A549 (cell line): ENCODE measurements at regions of chr2 and their contacts with region 1.

Region 1: GRCh38 chr2:3959372-3959771 is 256.0 kb downstream of the DCDC2C start:
- DNase-seq: peak; percentile 40 to 46
- ATAC-seq: peak; percentile 53 to 68; a peak in 4 of 6 replicates
- H3K4me3 ChIP-seq: no peak overlapping the region
- H3K27ac ChIP-seq: no peak overlapping the region
- H3K4me1 ChIP-seq: no peaks in the 10 kb centered on the region
- CTCF ChIP-seq: peak; percentile 95
- EP300 ChIP-seq: no peak
- POLR2A ChIP-seq: no peak
- RAD21 ChIP-seq: peak; percentile 91

Region 2: DNA sequence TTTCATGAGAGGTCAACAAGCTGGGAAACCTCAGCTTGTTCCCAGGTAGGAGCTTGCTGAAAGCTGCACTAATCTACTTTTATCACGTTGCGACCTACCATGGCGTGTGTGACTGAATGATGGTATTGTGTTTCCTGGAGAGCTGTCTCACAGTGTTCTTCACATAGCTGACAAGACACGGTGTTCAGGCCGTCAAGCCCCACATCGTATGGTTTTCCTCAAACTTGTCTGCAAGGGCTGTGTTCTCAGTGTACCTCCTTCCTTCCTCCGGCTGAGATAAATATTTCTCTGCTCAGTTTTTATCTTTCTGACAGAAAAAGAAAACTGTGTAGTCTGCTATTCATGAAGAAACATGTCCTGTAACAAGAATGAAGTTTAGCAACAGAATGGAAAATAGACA is 11.2 kb before region 1 on chr2:
- CTCF ChIA-PET with region 1: interaction called, 15 read pairs
- POLR2A ChIA-PET with region 1: no interaction called
- DNase-seq: no peak
- ATAC-seq: no peak
- H3K4me3 ChIP-seq: no peak overlapping the region
- H3K27ac ChIP-seq: no peak overlapping the region
- H3K4me1 ChIP-seq: no peaks in the 10 kb centered on the region
- CTCF ChIP-seq: no peak
- EP300 ChIP-seq: no peak
- POLR2A ChIP-seq: no peak
- RAD21 ChIP-seq: no peak

Region 3: GRCh38 chr2:3981446-3981987 is 22.1 kb after region 1 on chr2:
- CTCF ChIA-PET with region 1: interaction called, 18 read pairs
- POLR2A ChIA-PET with region 1: no interaction called
- DNase-seq: no peak
- ATAC-seq: no peak
- H3K4me3 ChIP-seq: no peak overlapping the region
- H3K27ac ChIP-seq: no peak overlapping the region
- H3K4me1 ChIP-seq: no peaks in the 10 kb centered on the region
- CTCF ChIP-seq: no peak
- EP300 ChIP-seq: no peak
- POLR2A ChIP-seq: no peak
- RAD21 ChIP-seq: no peak

Region 4: DNA sequence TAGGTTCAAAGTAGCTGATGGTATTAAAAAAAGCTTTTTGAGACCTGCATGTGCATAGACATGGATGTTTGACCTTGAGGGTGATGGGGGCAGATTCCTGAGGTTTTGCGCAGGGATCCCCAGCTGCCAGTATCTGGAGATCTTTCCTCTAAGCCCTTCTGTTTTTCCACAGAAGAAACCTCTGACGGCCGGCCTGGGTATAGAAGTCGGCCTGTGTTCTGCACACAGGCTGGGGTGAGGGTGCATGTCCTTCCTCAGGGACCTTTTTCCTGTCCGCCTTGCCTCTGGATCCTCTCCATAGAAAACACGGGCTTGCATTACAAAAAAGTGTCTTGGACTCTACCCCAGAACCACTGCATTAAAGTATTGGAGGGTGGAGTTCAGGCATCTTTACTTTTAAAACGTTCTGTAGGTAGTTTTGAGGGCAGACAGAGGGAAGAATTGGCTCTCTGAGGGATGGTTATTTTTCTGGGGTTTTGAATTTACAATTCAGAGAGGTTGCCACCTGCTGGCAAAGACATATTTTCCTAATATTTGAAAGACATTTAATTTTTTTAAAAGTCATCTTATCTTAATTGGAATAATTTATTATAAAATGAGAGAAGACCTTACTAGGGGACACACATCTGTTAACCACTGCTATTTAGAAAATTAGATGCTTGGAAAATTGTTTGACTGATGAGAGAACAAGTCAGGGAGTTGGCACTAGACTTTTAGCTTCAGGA is 94.6 kb after region 1 on chr2:
- CTCF ChIA-PET with region 1: interaction called, 10 read pairs
- POLR2A ChIA-PET with region 1: interaction called, 3 read pairs
- DNase-seq: peak in 1 of 2 experiments; percentile 7
- ATAC-seq: no peak
- H3K4me3 ChIP-seq: no peak overlapping the region
- H3K27ac ChIP-seq: no peak overlapping the region
- H3K4me1 ChIP-seq: no peaks in the 10 kb centered on the region
- CTCF ChIP-seq: peak; percentile 27; the same call in 1 of the 3 replicates
- EP300 ChIP-seq: no peak
- POLR2A ChIP-seq: no peak
- RAD21 ChIP-seq: peak; percentile 15 to 26; a peak in 3 of 5 replicates

Region 5: GRCh38 chr2:4427083-4427482 is 467.7 kb after region 1 on chr2:
- CTCF ChIA-PET with region 1: no interaction called
- POLR2A ChIA-PET with region 1: no interaction called
- DNase-seq: no peak
- ATAC-seq: no peak
- H3K4me3 ChIP-seq: no peak overlapping the region
- H3K27ac ChIP-seq: no peak overlapping the region
- H3K4me1 ChIP-seq: no peaks in the 10 kb centered on the region
- CTCF ChIP-seq: no peak
- EP300 ChIP-seq: no peak
- POLR2A ChIP-seq: no peak
- RAD21 ChIP-seq: no peak

Region 6: DNA sequence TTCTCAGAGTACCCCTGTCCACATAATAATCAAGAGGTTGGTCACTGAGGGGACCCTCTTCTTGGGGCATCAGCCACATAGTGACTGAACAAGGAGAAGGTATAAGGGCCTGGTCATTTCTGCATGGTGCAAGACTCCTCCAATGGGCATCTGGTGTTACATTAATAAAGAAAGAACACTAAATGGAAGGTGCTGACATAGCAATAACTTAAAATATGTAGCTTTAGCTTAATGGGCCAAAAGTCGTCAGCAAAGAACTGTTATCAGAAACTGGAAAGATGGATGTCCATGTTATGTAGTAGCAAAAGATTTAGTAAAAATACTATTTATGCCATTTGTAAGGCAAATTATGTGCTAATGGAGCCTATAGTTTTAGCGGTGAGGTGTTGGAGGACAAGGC is 816.3 kb after region 1 on chr2:
- CTCF ChIA-PET with region 1: no interaction called
- POLR2A ChIA-PET with region 1: no interaction called
- DNase-seq: no peak
- ATAC-seq: no peak
- H3K4me3 ChIP-seq: no peak overlapping the region
- H3K27ac ChIP-seq: no peak overlapping the region
- H3K4me1 ChIP-seq: no peaks in the 10 kb centered on the region
- CTCF ChIP-seq: no peak
- EP300 ChIP-seq: no peak
- POLR2A ChIP-seq: no peak
- RAD21 ChIP-seq: no peak